Endothelial cell of umbilical vein (primary cell): ENCODE measurements at regions of chr1 and their contacts with region 1.

Region 1: DNA sequence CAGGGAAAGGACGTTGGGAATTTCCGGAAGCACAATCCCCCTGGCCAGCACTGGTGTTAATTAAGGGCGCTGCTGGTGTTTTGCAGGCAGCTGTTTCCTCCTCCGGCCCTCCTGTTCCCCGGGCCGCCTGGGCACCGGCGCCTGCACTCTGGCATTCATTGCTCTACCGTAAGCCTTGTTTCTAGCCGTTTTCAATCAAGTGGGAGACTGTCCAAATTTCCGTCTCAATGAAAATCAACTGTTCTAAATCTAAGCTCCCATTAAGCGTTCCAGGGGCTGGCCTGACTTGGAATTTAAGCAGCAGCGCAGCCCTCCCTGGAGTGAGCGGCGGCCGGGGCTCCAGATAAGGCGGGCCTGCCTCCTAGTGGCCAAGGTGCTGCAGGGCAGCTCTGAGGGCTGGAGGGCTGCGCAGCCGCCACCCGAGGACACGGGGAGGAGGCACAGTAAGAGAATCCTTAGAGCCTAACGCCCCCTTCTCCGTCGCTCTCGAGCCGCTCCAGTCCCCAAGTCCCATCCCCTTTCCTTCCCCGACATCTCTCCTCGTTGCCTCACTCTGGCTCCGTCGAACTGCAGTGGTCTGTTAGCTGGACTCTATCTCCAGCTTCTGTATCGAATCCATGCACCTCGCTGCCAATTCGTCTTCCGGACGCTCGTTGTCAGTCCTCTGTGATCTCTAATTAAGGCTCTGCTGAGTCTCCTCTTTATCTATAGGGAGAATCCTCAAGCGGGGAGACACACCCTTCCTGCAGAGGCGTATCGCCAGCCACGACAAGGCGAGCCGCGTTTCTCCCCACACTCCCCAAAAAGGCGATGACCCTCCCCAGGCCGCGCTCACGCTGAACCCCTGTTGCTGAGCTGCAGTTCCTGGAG is 57.8 kb upstream of the LRRC8D start:
- DNase-seq: peak; percentile 95
- H3K4me3 ChIP-seq: peak overlapping the region; percentile 5 to 34 (median 33)
- H3K27ac ChIP-seq: peak overlapping the region; percentile 52
- H3K4me1 ChIP-seq: peaks cover 46% of the 10 kb centered on the region
- H3K27me3 ChIP-seq: no peaks in the 10 kb centered on the region
- CTCF ChIP-seq: peak; percentile 98
- POLR2A ChIP-seq: peak; percentile 58

Region 2: DNA sequence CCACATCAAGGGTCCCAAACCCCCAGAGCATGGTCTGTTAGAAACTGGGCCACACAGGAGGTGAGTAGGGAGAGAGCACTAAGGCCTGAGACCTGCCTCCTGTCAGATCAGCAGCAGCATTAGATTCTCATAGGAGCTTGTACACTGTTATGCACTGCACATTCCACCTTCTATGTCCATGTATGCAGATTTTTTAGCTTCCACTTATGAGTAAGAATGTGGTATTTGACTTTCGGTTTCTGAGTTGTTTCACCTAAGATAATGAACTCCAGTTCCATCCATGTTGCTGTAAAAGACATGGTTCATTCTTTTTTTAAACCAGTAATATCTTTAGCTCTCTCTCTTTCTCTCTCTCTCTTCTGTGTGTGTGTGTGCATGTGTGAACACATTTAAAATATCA is 399.8 kb before region 1 on chr1:
- CTCF ChIA-PET with region 1: no interaction called
- POLR2A ChIA-PET with region 1: no interaction called
- dilution Hi-C with region 1: no loop called
- intact Hi-C with region 1: no loop called
- DNase-seq: no peak
- H3K4me3 ChIP-seq: no peak overlapping the region
- H3K27ac ChIP-seq: no peak overlapping the region
- H3K4me1 ChIP-seq: no peaks in the 10 kb centered on the region
- H3K27me3 ChIP-seq: peaks cover 0 to 5% of the 10 kb centered on the region in 2 experiments
- CTCF ChIP-seq: no peak
- POLR2A ChIP-seq: no peak

Region 3: GRCh38 chr1:89524369-89525168 is 238.4 kb before region 1 on chr1 and contains the start of gene LRRC8B:
- CTCF ChIA-PET with region 1: interaction called, 10 read pairs
- POLR2A ChIA-PET with region 1: no interaction called
- dilution Hi-C with region 1: no loop called
- intact Hi-C with region 1: loop called (anchors 1 kb)
- DNase-seq: peak; percentile 89
- H3K4me3 ChIP-seq: peak within 1 kb of the TSS; percentile 65 to 88 (median 74)
- H3K27ac ChIP-seq: peak within 1 kb of the TSS; percentile 62
- H3K4me1 ChIP-seq: peaks cover 24% of the 10 kb centered on the region
- H3K27me3 ChIP-seq: no peaks in the 10 kb centered on the region
- CTCF ChIP-seq: no peak
- POLR2A ChIP-seq: peak; percentile 54
- total RNA-seq, gene LRRC8B: 15.2 and 15.9 TPM in 2 replicates

Region 4: GRCh38 chr1:89605692-89606091 is 157.3 kb before region 1 on chr1:
- CTCF ChIA-PET with region 1: interaction called, 36 read pairs
- POLR2A ChIA-PET with region 1: no interaction called
- dilution Hi-C with region 1: no loop called
- intact Hi-C with region 1: no loop called
- DNase-seq: peak; percentile 82
- H3K4me3 ChIP-seq: no peak overlapping the region
- H3K27ac ChIP-seq: no peak overlapping the region
- H3K4me1 ChIP-seq: peaks cover 14% of the 10 kb centered on the region
- H3K27me3 ChIP-seq: no peaks in the 10 kb centered on the region
- CTCF ChIP-seq: no peak
- POLR2A ChIP-seq: no peak

Region 5: GRCh38 chr1:89632657-89633247 is 130.3 kb before region 1 on chr1 and contains the start of gene LRRC8C:
- CTCF ChIA-PET with region 1: interaction called, 230 read pairs
- POLR2A ChIA-PET with region 1: interaction called, 16 read pairs
- dilution Hi-C with region 1: no loop called
- intact Hi-C with region 1: loop called (anchors 1 kb)
- DNase-seq: peak; percentile 84
- H3K4me3 ChIP-seq: peak within 1 kb of the TSS; percentile 72 to 100 (median 99)
- H3K27ac ChIP-seq: peak within 1 kb of the TSS; percentile 97
- H3K4me1 ChIP-seq: peaks cover 32% of the 10 kb centered on the region
- H3K27me3 ChIP-seq: no peaks in the 10 kb centered on the region
- CTCF ChIP-seq: peak; percentile 18 to 69
- POLR2A ChIP-seq: peak; percentile 73
- total RNA-seq, gene LRRC8C: 40.6 and 51.5 TPM in 2 replicates

Region 6: DNA sequence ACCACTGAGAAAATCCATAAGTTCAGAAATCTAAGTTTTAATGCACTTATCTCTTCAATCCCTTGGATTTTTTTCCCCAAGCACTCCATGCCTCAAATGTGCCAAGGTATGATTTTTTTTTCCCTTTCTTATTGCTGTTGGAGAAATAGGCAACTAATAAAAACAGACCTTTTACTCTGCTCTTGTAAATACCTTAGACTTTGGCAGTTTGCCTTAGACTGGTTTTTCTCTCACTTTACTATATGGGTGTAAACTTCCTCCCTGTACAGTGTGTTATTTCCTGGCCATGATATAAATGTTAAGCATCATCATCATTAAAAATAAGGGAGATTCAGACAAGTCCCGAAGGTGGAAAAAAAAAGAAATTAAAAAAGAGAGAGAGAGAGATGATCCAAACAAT is 64.4 kb before region 1 on chr1:
- CTCF ChIA-PET with region 1: interaction called, 16 read pairs
- POLR2A ChIA-PET with region 1: no interaction called
- dilution Hi-C with region 1: no loop called
- intact Hi-C with region 1: no loop called
- DNase-seq: peak; percentile 85
- H3K4me3 ChIP-seq: no peak overlapping the region
- H3K27ac ChIP-seq: peak overlapping the region; percentile 54
- H3K4me1 ChIP-seq: peaks cover 60% of the 10 kb centered on the region
- H3K27me3 ChIP-seq: no peaks in the 10 kb centered on the region
- CTCF ChIP-seq: no peak
- POLR2A ChIP-seq: no peak

Region 7: DNA sequence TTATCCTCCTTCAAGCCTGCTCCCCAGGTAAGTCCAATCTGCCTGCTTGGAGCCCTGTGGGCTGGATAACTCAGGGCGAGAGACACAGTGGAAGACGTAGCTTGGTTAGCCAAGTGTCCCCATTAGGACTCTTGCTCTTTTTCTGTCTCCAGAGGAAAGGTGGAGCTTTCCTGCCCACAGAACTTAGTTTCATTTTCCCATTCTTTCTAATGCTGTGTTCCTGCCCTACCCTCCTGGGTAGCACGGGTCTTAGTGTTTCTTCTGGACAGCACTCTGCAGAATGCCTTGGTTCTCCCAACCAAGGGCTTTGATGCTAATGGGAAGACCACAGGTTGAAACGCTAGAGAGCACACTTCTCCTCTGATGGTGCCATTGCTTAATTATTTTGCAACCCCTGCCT is 34.6 kb before region 1 on chr1:
- CTCF ChIA-PET with region 1: interaction called, 11 read pairs
- POLR2A ChIA-PET with region 1: no interaction called
- dilution Hi-C with region 1: no loop called
- intact Hi-C with region 1: no loop called
- DNase-seq: no peak
- H3K4me3 ChIP-seq: no peak overlapping the region
- H3K27ac ChIP-seq: no peak overlapping the region
- H3K4me1 ChIP-seq: peaks cover 37% of the 10 kb centered on the region
- H3K27me3 ChIP-seq: no peaks in the 10 kb centered on the region
- CTCF ChIP-seq: no peak
- POLR2A ChIP-seq: no peak

Region 8: GRCh38 chr1:90210631-90211491 is 447.8 kb after region 1 on chr1:
- CTCF ChIA-PET with region 1: no interaction called
- POLR2A ChIA-PET with region 1: no interaction called
- dilution Hi-C with region 1: no loop called
- intact Hi-C with region 1: no loop called
- DNase-seq: no peak
- H3K4me3 ChIP-seq: no peak overlapping the region
- H3K27ac ChIP-seq: no peak overlapping the region
- H3K4me1 ChIP-seq: no peaks in the 10 kb centered on the region
- H3K27me3 ChIP-seq: no peaks in the 10 kb centered on the region
- CTCF ChIP-seq: no peak
- POLR2A ChIP-seq: no peak